CD8-positive, alpha-beta memory T cell (primary cell): ENCODE measurements at regions of chr2 and their contacts with region 1.

Region 1: DNA sequence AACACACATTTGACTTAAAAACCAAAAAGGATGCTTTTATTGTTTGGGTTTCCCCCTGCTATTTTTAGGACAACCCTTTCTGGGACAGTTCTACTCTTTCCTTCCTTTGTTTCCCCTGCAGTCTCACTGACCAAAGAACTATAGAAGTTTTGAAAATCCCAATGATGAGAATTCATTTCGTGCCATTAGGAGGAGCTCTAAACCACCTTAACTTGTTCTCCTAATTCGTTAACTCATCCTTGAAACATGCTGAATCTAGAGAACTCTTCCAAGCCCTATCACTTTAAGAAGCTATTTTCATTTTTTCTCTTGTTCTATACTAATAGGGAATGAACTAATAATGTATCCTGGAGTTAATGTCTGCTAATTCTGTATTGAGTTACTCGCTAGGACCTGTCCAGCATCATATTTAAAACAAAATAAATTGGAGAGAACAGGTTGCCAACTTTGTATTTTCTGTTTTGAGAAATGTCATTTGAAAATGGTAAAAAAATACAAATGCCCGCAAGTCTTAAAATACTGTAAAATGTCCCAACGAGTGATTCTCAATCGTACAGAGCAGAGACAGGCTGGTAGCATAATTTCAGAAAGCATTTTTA is 62.9 kb downstream of the AFTPH start:
- DNase-seq: peak in 2 of 5 donors; percentile 23 to 36
- H3K4me3 ChIP-seq: no peak overlapping the region
- H3K4me3 Mint-ChIP-seq: no peak overlapping the region
- H3K27ac ChIP-seq: no peak overlapping the region
- H3K27ac Mint-ChIP-seq: peak overlapping the region in 2 of 8 donors; percentile 2 to 3
- H3K4me1 ChIP-seq: no peaks in the 10 kb centered on the region
- H3K4me1 Mint-ChIP-seq: peaks cover 0 to 4% (median 0%) of the 10 kb centered on the region in 3 donors
- H3K27me3 ChIP-seq: no peaks in the 10 kb centered on the region
- H3K27me3 Mint-ChIP-seq: no peaks in the 10 kb centered on the region

Region 2: GRCh38 chr2:64767670-64768468 is 180.9 kb after region 1 on chr2:
- CTCF ChIA-PET with region 1: no interaction called
- POLR2A ChIA-PET with region 1: interaction called, 11 read pairs
- DNase-seq: peak; percentile 57 to 87 (median 68)
- H3K4me3 ChIP-seq: peak overlapping the region; percentile 74
- H3K4me3 Mint-ChIP-seq: peak overlapping the region; percentile 87 to 95 (median 90)
- H3K27ac ChIP-seq: peak overlapping the region; percentile 71
- H3K27ac Mint-ChIP-seq: peak overlapping the region; percentile 58 to 97 (median 92)
- H3K4me1 ChIP-seq: peaks cover 10% of the 10 kb centered on the region
- H3K4me1 Mint-ChIP-seq: peaks cover 16 to 22% (median 21%) of the 10 kb centered on the region in 3 donors
- H3K27me3 ChIP-seq: no peaks in the 10 kb centered on the region
- H3K27me3 Mint-ChIP-seq: no peaks in the 10 kb centered on the region

Region 3: DNA sequence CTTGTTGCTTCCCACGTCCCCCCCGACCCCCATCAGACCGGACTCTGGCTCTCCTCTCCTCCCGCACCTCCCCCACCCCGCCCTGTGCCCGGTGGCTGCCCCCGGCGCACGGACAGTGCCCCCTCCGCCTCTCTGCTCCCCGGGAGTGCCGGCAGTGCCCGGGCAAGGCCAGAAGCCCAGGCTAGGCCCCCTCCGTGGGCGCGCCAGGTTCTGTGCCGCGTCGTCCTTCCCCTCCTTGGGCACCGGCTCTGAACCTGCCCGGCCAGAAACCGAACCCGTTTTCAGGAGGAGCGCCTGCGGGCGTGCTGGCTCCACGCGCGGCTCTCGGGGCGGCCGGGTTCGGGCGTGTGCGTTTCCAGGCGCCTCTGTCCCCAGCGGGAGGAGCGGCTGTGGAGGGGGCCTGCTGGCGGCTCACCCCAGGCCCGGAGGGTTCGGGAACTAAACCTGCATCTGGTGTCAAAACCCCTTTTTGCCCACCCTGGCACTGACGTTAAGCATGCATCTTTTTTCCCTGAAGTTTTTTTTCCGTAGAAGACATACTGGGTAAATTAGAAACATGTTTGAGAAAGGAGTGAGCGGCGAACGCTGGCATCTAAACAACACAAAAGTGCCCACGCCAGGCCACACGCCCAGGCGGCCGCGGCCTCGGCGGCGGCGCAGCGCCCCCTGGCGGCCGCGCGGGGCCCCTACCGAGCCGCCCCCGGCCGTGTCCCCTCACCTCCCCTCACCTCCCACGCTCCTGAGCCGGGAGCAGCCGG is 278.3 kb after region 1 on chr2:
- CTCF ChIA-PET with region 1: interaction called, 14 read pairs
- POLR2A ChIA-PET with region 1: no interaction called
- DNase-seq: peak; percentile 48 to 74 (median 70)
- H3K4me3 ChIP-seq: peak overlapping the region; percentile 63
- H3K4me3 Mint-ChIP-seq: peak overlapping the region in 5 of 7 donors; percentile 74 to 91 (median 79)
- H3K27ac ChIP-seq: no peak overlapping the region
- H3K27ac Mint-ChIP-seq: peak overlapping the region in 3 of 8 donors; percentile 71 to 80 (median 74)
- H3K4me1 ChIP-seq: peaks cover 8% of the 10 kb centered on the region
- H3K4me1 Mint-ChIP-seq: peaks cover 0 to 4% (median 0%) of the 10 kb centered on the region in 3 donors
- H3K27me3 ChIP-seq: no peaks in the 10 kb centered on the region
- H3K27me3 Mint-ChIP-seq: peaks cover 7% of the 10 kb centered on the region in 2 donors

Region 4: DNA sequence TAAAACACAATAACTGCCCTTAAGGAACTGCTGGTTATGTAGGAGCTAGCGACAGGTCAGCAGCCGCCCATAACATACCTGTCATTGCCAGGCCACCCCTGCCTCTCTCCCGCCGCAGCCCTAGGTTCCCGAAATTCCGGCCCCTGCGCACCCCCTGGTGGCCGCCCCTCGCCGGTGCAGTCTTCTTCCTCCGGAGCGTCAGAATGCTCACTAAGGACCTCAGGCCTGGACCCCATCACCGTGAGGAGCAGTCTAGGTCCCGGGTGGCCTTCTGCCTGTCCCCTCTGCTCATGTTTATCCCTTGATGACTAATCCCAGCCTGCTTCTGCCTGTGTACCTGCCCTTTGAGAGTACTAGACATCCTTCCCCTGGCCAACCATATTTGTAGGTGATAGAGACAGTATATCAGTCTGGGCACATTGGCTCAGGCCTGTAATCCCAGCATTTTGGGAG is 286.5 kb after region 1 on chr2:
- CTCF ChIA-PET with region 1: interaction called, 10 read pairs
- POLR2A ChIA-PET with region 1: no interaction called
- DNase-seq: peak; percentile 63 to 79 (median 69)
- H3K4me3 ChIP-seq: no peak overlapping the region
- H3K4me3 Mint-ChIP-seq: peak overlapping the region in 3 of 7 donors; percentile 57 to 75 (median 61)
- H3K27ac ChIP-seq: no peak overlapping the region
- H3K27ac Mint-ChIP-seq: peak overlapping the region in 3 of 8 donors; percentile 1 to 83 (median 60)
- H3K4me1 ChIP-seq: peaks cover 7% of the 10 kb centered on the region
- H3K4me1 Mint-ChIP-seq: peaks cover 6 to 8% (median 7%) of the 10 kb centered on the region in 3 donors
- H3K27me3 ChIP-seq: no peaks in the 10 kb centered on the region
- H3K27me3 Mint-ChIP-seq: peaks cover 6% of the 10 kb centered on the region in 2 donors